ENCODE measurements at regions of chr6 and their contacts with region 1.

Region 1: DNA sequence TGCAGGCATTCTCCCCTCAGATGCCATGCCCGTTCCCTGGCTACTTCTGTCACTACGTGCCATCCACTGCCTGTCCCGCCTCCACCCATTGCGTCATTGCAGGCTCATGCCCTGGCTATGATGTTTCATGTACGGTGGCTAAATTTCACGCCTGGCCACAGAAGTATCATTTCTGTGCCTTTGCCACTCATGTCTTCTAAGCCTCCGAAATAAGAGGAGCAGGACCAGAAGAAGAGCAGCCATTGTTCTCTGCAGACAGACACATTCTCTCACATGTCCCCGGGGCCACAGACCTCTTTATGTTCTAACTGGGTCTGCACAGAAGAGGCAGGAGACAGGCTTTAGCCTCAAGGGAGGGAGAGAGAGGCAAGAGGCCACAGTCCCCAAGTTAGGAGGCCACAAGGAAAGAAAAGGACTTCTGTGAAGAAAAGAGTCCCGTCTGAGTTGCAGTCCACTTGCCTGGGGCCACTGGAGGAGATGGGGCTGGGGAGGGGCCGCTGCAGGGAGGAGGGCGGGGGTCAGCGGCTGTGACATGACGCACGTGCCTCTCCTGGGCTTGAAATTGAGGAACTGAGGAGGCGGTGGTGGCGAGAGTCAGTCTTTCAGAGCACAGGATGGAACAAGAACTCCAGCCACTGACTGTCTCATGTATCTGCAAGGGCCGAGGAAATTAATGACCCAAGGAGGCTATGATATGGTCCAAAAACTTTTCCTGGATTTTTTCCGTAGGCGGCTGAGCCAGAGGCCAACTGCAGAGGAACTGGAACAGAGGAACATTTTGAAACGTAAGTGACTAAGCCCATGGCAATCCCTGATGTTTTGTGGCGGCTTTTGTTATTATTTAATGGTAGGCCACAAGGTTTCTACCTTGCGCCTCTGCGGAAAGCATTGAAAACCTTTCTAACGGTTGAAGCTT is 55.9 kb downstream of the TBC1D7 start:
- DNase-seq: no peak
- H3K4me3 Mint-ChIP-seq: no peak overlapping the region
- H3K27ac Mint-ChIP-seq: no peak overlapping the region
- H3K4me1 Mint-ChIP-seq: peaks cover 15% of the 10 kb centered on the region
- H3K27me3 Mint-ChIP-seq: no peaks in the 10 kb centered on the region

Region 2: DNA sequence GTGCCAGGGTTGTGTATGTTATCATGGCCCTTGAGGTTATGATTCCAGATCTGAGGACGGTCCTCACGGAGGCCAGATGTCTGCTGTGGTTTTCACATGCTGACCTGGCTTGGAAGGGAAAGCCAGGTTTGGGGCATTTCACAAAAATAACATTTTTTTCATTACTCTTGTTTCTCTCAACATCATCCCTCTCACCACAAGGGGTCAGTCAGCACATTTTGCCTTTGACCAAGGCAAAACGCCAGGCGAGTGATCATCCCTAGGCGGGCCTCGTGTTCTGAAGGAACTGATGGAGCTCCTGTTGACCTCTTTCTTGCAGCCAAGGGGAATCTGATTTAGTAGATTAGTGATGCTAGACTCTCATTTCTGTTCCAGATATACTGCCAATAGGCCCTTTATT is 77.5 kb before region 1 on chr6:
- CTCF ChIA-PET with region 1: no interaction called
- intact Hi-C with region 1: loop called (anchors 5 kb)
- DNase-seq: peak; percentile 49
- H3K4me3 Mint-ChIP-seq: no peak overlapping the region
- H3K27ac Mint-ChIP-seq: no peak overlapping the region
- H3K4me1 Mint-ChIP-seq: no peaks in the 10 kb centered on the region
- H3K27me3 Mint-ChIP-seq: peaks cover 9% of the 10 kb centered on the region

Region 3: DNA sequence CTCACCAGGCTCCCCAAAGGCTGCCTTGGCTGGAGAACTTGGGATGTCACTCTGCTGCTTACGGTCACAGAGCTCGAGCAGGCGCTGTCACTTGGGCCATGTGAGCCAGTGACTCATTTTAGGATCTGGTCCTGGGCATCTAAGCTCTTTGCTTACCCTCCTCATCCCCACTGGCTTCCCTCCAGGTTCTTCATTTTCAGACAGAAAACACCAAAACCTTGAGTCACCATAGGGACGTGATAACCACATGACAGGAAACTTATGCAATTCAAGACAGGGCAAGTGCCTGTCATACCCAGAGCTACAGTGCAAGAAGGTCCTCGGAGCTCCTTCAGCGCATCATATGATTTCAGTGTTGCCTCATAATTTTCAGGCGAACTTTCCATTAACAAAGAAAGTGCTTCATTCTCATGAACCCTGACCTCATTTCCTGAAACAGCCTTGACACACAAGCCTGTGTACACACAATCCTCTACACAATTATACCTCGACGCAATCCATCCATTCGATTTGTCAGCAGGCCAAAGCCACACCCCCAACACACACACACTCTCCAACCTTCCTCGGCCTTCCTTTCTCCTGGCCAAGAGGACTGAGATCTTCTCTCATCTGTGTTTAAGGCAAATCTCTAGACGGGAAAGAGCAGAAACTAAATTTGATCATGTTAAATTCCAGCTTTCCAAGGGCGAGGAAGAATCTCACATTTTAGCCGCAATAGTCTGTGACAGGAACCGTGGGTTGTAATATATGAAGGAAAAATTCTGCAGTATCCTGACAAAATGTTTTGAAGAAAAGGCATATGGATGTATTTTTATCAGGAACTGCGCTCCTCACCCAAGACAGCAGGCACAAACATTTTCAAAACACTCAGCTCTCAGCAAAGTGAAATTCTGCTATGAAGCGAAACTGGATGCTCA is 30.6 kb after region 1 on chr6:
- CTCF ChIA-PET with region 1: no interaction called
- intact Hi-C with region 1: loop called (anchors 1 kb)
- DNase-seq: peak; percentile 79
- H3K4me3 Mint-ChIP-seq: peak overlapping the region; percentile 10
- H3K27ac Mint-ChIP-seq: peak overlapping the region; percentile 86
- H3K4me1 Mint-ChIP-seq: peaks cover 38% of the 10 kb centered on the region
- H3K27me3 Mint-ChIP-seq: no peaks in the 10 kb centered on the region